GM10248 (cell line): ENCODE measurements at regions of chr10 and their contacts with region 1.

Region 1: GRCh38 chr10:60237977-60238758 is 151.5 kb downstream of the ANK3 start:
- DNase-seq: peak; percentile 46
- CTCF ChIP-seq: peak; percentile 37

Region 2: DNA sequence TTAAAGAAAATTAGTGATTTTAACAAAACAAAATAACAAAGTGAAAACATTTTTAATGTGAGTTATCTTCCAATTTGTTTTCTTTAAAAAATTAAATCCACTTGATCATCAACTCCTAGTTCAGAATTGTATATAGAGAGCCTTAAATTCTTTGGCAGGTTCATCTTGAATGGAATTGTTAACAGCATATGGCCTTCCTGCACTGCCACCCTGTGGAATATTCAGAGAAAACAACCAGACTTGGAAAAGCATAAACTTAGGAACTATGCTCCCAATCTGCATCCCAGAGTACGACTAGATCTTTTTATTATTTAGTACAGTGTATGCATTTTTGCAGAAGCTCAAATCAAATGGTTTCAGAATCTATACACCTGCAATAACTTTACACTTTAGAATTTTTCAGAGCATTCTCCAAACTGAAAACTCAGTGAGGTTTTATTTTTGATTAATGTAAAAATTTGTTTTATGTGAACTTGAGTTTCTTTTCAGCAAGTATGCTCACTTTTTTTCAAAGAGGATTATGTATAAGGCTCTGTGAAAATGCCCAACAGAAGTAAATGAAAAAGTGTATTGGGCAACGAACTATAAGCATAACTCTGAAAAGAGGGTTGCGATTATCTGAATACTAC is 196.4 kb after region 1 on chr10:
- CTCF ChIA-PET with region 1: interaction called, 10 read pairs
- POLR2A ChIA-PET with region 1: no interaction called
- DNase-seq: peak; percentile 37
- CTCF ChIP-seq: peak; percentile 54